A549 (cell line): ENCODE measurements at regions of chr6 and their contacts with region 1.

Region 1: GRCh38 chr6:31139599-31139998 is 733 bp upstream of the PSORS1C2 start:
- DNase-seq: peak in 1 of 2 experiments; percentile 22
- ATAC-seq: peak in 1 of 2 experiments; percentile 33; a peak in 3 of 6 replicates
- H3K4me3 ChIP-seq: no peak overlapping the region
- H3K27ac ChIP-seq: 0 out of 6 replicates have a peak overlapping the region, but pooled peaks of 1 of the 2 experiments have one; percentile 16
- H3K4me1 ChIP-seq: peaks cover 10% of the 10 kb centered on the region; the same call in 2 of the 3 replicates
- CTCF ChIP-seq: no peak
- EP300 ChIP-seq: no peak
- POLR2A ChIP-seq: no peak
- RAD21 ChIP-seq: no peak

Region 2: GRCh38 chr6:31042806-31043205 is 96.8 kb before region 1 on chr6:
- CTCF ChIA-PET with region 1: no interaction called
- POLR2A ChIA-PET with region 1: no interaction called
- DNase-seq: peak; percentile 49 to 71
- ATAC-seq: peak; percentile 67 to 85; a peak in 4 of 6 replicates
- H3K4me3 ChIP-seq: no peak overlapping the region
- H3K27ac ChIP-seq: peak overlapping the region; percentile 86 to 87; a peak in 5 of 6 replicates
- H3K4me1 ChIP-seq: peaks cover 14% of the 10 kb centered on the region
- CTCF ChIP-seq: peak; percentile 40
- EP300 ChIP-seq: no peak
- POLR2A ChIP-seq: no peak
- RAD21 ChIP-seq: peak; percentile 52 to 57

Region 3: GRCh38 chr6:31057426-31058003 is 82.1 kb before region 1 on chr6:
- CTCF ChIA-PET with region 1: no interaction called
- POLR2A ChIA-PET with region 1: no interaction called
- DNase-seq: no peak
- ATAC-seq: no peak
- H3K4me3 ChIP-seq: no peak overlapping the region
- H3K27ac ChIP-seq: peak overlapping the region in 1 of 2 experiments; percentile 49; a peak in 3 of 6 replicates
- H3K4me1 ChIP-seq: peaks cover 15% of the 10 kb centered on the region
- CTCF ChIP-seq: no peak
- EP300 ChIP-seq: no peak
- POLR2A ChIP-seq: no peak
- RAD21 ChIP-seq: no peak

Region 4: DNA sequence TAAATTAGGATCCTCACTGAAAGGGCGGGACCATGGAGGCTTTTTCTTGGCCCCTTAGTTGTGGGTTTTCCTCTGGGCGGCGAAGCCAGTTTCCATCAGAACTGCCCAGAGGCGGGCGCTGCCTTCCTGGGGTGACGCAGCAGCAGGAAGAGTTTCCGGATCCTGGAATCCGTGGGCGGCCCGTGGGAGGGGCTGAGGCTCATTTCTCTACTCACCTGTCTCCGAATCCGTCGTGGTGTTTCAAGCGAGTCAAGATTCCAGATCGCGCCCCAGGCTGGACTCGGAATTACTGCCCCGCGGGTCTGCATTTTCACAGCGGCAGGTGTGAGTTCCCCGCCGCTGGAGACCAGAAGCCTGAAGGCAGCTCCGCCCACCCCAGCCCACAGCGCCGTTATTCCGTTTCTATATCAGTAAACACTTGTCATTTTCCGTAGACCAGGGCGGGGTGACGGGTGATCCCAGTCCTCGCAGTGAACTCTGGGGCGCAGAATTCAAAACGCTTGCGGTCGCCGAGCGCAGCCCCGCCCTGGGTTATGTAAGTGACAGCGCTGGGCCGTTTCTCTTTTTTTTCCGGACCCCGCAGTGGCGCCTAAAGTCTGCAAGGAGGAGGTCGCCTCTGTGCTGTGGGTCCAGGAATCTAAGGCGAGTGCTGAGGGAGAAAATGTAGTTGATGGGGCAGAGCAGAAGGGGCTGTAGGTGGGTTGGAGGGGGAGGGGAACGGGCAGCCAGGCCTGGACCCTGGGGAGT is 58.1 kb after region 1 on chr6:
- CTCF ChIA-PET with region 1: interaction called, 70 read pairs
- POLR2A ChIA-PET with region 1: no interaction called
- DNase-seq: peak; percentile 40 to 83
- ATAC-seq: peak; percentile 89 to 94
- H3K4me3 ChIP-seq: peak overlapping the region; percentile 68
- H3K27ac ChIP-seq: peak overlapping the region; percentile 84 to 96
- H3K4me1 ChIP-seq: peaks cover 3% of the 10 kb centered on the region
- CTCF ChIP-seq: no peak
- EP300 ChIP-seq: no peak
- POLR2A ChIP-seq: peak; percentile 30; the same call in 1 of the 2 replicates
- RAD21 ChIP-seq: no peak